Mammary epithelial cell (primary cell): ENCODE measurements at regions of chr2 and their contacts with region 1.

Region 1: DNA sequence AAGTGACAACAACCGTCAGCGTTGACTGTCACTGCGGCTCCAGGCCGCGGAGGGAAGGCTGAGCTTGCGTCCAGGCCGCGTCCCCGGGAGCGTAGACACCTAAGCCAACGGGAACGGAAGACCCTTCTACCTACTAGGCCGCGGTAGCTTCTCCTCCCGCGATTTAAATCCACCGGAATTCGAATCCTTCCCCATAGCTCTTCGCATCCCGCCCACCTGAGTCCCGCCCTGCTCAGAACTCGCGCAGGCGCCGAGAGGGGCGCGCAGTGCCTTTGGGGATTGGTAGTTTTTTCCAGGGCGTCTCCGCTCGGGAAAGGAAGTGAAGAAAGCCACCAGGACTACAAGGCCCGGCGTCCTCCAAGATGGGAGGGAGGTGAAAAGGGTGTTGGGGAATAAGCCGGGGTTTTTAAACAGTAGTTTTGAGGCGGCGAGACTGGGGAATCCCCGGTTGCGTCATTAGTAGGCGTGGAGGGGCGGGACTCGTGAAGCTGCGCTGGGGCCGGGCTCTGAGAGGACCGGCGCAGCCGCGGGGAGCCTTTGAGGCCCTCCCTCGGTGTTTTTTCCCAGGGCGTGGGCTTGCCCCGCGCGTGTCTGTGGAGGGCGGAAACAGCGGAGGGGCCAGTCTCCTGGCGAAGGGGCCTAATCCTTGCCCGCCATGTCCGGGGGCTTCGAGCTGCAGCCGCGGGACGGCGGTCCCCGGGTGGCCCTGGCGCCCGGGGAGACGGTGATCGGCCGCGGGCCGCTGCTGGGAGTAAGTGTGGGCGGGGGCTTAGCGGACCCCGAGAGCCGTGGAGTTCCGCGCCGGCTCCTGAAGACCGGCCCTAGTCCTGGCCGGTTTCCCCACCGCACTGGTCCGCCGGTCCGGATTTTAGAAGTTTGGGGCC is at the starts of genes APLF and FBXO48:
- DNase-seq: peak; percentile 99
- H3K4me3 ChIP-seq: peak within 1 kb of the TSS; percentile 93 to 98 (median 97)
- H3K27ac ChIP-seq: peak within 1 kb of the TSS; percentile 94
- H3K4me1 ChIP-seq: peaks cover 25% of the 10 kb centered on the region
- H3K27me3 ChIP-seq: no peaks in the 10 kb centered on the region
- CTCF ChIP-seq: no peak
- total RNA-seq, gene APLF: 3.7 to 4.8 TPM
- total RNA-seq, gene FBXO48: 1.3 to 1.6 TPM

Region 2: GRCh38 chr2:68045342-68045741 is 422.0 kb before region 1 on chr2:
- CTCF ChIA-PET with region 1: no interaction called
- dilution Hi-C with region 1: no loop called
- in situ Hi-C with region 1: no loop called
- intact Hi-C with region 1: no loop called
- DNase-seq: no peak
- H3K4me3 ChIP-seq: no peak overlapping the region
- H3K27ac ChIP-seq: no peak overlapping the region
- H3K4me1 ChIP-seq: peaks cover 3% of the 10 kb centered on the region
- H3K27me3 ChIP-seq: no peaks in the 10 kb centered on the region
- CTCF ChIP-seq: no peak

Region 3: DNA sequence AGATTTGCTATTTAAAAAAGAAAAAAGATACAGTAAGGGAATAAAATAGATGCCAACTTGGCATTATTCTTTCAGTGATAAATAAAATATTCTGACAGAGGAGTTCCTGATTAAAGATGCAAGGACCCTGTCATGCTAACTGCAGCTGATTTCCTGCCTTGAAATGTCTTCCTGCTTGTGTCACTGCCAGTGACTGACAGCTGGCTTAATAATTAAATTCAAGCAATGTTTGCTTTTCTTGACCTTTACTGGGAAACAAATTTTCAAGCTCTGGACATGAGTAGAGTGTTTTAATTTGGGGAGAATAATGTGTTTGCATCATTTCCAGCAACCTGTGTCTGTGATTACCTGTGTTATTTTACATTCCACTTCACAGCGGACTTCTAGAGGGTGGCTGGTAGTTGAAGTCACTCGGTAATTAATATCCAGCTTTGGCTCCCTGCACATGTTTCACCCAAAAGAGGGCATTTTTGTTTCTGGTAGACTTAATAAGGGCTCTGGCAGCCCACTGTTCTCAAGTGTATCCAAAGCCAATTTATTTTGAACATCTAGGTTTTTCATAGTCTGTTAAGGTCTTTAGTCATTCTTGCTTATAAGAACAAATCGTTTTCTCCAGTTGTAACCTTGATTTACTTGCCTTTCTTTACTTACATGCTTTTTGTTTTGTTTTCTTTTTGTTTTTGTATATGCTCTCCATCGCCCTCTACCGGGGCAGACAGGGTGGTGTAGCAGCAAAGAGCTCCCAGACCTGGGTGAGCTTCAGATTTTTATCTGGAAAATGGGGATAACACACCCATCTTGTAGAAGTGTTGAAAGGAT is 127.6 kb after region 1 on chr2:
- CTCF ChIA-PET with region 1: interaction called, 13 read pairs
- dilution Hi-C with region 1: no loop called
- in situ Hi-C with region 1: no loop called
- intact Hi-C with region 1: loop called (anchors 1 kb)
- DNase-seq: peak; percentile 25
- H3K4me3 ChIP-seq: no peak overlapping the region
- H3K27ac ChIP-seq: no peak overlapping the region
- H3K4me1 ChIP-seq: no peaks in the 10 kb centered on the region
- H3K27me3 ChIP-seq: no peaks in the 10 kb centered on the region
- CTCF ChIP-seq: peak; percentile 89 to 95

Region 4: GRCh38 chr2:68709421-68709911 is 242.1 kb after region 1 on chr2:
- CTCF ChIA-PET with region 1: no interaction called
- dilution Hi-C with region 1: no loop called
- in situ Hi-C with region 1: loop called (anchors 5 to 10 kb)
- intact Hi-C with region 1: no loop called
- DNase-seq: peak; percentile 39
- H3K4me3 ChIP-seq: no peak overlapping the region
- H3K27ac ChIP-seq: no peak overlapping the region
- H3K4me1 ChIP-seq: no peaks in the 10 kb centered on the region
- H3K27me3 ChIP-seq: peaks cover 3% of the 10 kb centered on the region
- CTCF ChIP-seq: peak; percentile 63 to 81

Region 5: DNA sequence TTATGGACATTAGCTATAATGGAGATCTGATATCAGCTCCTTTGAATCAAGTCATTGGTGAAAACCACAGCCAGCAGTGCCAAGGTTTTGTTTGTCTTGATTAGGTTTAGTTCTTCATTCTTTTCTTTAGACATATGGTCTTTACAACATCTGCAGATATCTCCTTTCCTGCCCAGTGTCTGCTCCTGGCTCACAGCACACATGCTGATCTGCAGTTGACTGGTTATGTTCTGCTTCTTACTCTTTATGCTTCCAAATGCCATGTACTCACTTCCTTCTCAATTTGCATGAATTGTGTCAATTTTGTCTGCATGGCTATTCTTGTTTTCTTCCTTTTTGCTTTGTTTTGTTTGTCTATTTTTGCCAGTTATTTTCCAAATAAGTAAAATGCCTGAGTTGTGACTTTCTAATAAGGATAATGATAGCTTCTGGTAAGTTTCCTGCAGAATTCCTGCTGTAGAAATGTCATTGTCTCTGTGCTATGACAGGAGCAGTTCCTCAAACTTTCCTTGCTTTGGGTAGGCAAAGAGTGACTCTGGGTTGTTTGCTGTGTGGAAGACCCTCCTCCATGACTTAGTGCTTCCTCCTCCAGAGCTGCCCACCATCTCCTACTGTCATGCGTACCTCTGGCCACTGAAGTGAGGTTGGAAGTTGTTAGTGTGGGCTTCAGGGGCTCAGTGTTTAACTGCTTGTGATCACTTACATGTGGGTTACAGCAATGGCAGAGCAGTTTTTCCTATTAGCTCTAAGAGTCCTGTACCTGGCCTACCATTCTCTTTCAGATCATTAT is 275.5 kb after region 1 on chr2:
- CTCF ChIA-PET with region 1: interaction called, 6 read pairs
- dilution Hi-C with region 1: no loop called
- in situ Hi-C with region 1: no loop called
- intact Hi-C with region 1: loop called (anchors 1 kb)
- DNase-seq: no peak
- H3K4me3 ChIP-seq: no peak overlapping the region
- H3K27ac ChIP-seq: no peak overlapping the region
- H3K4me1 ChIP-seq: peaks cover 36% of the 10 kb centered on the region
- H3K27me3 ChIP-seq: no peaks in the 10 kb centered on the region
- CTCF ChIP-seq: no peak

Region 6: DNA sequence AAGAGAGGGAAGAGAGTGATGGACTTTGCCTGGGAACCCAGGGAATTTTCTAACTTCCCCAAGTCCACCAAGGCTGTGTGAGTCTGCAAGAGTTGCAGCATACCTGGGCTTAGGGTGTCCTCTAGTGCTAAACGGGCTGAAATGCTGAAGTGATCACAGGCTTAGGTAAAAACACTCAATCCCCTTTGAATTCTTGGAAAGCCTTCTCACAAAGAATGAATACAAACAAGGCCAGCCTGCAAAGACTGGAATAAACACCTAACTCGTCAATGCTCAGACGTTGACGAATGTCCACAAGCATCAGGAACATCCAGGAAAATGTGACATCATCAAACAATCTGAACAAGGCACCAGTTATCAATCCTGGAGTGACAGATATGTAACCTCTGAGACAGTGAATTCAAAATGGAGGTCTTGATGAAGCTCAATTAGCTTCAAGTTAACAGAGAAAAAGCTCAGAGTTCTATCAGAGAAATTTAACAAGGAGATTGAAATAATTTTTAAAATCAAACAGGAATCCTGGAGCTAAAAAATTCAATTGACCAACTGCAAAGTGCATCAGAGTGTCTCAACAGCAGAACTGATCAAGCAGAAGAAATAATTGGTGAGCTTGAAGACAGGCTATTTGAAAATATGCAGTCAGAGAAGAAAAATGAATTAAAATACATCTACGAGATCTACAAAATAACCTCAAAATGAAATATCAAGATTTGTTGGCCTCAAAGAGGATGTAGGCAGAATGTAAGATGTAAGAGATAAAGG is 434.1 kb after region 1 on chr2:
- CTCF ChIA-PET with region 1: no interaction called
- dilution Hi-C with region 1: no loop called
- in situ Hi-C with region 1: no loop called
- intact Hi-C with region 1: loop called (anchors 2 kb)
- DNase-seq: peak; percentile 28
- H3K4me3 ChIP-seq: no peak overlapping the region
- H3K27ac ChIP-seq: no peak overlapping the region
- H3K4me1 ChIP-seq: no peaks in the 10 kb centered on the region
- H3K27me3 ChIP-seq: no peaks in the 10 kb centered on the region
- CTCF ChIP-seq: peak in 1 of 2 donors; percentile 16